Activated T-helper 2 cell treated with anti-CD3 and anti-CD28 coated beads, Interferon-gamma antibody, Interleukin-2, Interleukin-4, amounts not matched to agents 10 μg/mL and 5 μg/mL and 100 μg/mL, durations not matched to agents 14 hours and 24 hours and 36 hours (primary cell): ENCODE measurements at regions of chr7 and their contacts with region 1.

Region 1: DNA sequence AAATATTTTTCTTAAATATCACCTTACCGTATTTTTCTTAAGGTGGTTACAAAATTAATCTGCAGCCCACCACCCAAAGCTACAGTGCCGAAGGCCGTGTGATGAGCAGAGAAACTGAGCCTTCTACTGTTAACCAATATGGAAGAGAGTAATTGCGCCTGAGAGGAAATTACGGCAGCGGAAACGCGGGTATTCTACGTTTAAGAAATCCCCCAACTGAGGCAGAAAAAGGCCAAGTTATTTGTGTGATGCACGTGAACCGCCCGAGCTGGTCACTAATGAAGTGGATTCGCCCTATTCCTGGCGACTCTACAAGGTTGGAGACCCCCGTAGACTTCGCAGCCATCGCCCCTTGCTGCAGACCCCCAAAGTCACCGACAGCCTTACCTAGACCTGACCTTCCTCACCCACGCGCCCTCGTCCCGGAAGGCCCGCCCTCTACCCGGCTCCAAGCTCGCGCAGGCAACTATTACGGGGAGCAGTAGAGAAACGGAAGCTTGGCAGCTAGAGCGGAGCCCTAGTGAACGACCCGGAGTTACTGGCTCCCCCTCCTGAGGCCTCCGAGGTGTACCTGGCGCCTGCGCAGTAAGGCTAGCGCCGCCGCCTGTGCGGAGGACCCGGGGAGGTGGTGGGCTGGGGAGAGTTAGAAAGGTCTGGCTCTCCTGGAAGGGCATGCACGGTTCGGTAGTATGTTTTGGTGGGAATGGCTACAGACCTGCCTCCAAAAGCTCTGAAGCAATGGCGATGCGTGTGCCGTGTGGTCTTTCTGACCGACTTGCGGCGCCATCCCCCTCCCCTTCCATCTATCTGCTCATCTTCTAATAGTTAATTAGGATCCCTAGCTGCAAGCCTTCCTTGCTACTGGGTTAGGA is at the start of gene MRPS33:
- DNase-seq: peak; percentile 93
- H3K4me3 Mint-ChIP-seq: peak within 1 kb of the TSS; percentile 97
- H3K27ac Mint-ChIP-seq: peak within 1 kb of the TSS; percentile 100
- H3K4me1 Mint-ChIP-seq: peaks cover 31% of the 10 kb centered on the region
- H3K27me3 Mint-ChIP-seq: peaks cover 21% of the 10 kb centered on the region
- total RNA-seq, gene MRPS33: 67.4 and 70.0 TPM in 2 replicates

Region 2: GRCh38 chr7:140517546-140518369 is 497.0 kb before region 1 on chr7:
- intact Hi-C with region 1: loop called (anchors 1 kb)
- DNase-seq: peak; percentile 47
- H3K4me3 Mint-ChIP-seq: no peak overlapping the region
- H3K27ac Mint-ChIP-seq: no peak overlapping the region
- H3K4me1 Mint-ChIP-seq: peaks cover 5% of the 10 kb centered on the region
- H3K27me3 Mint-ChIP-seq: peaks cover 2% of the 10 kb centered on the region

Region 3: DNA sequence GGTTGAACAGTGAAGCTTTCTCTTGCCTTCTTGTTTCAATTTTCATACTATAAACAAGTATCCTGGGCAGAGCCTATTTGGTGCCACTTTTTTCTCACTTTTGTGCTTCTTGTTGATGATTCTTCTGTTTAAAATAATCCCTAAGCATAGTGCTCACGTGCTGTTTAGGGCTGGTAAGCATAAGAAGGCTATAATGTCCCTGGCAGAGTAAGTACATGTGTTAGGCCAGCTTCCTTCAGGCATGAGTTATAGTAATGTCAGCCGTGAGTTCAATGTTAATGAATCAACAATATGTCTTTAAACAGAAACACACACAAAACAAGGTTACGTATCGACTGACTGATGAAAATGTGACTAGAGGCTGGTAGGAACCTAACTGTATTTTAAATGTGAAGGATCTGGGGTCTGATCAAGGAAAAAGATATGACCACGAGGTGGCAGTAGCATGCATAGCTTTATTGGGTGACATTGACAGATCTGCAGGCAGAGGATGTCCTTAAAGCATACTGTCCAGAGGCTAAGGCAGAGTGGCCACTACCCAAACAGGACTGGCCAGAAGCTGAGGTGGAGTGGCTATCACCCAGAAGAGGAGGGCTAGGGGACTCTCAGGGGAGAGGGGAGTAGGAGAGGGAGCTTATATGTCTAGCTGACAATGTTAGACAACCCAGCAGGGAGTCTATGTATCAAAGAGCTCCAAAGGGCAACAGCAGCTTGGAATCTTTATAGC is 203.8 kb before region 1 on chr7:
- intact Hi-C with region 1: loop called (anchors 1 kb)
- DNase-seq: peak; percentile 34
- H3K4me3 Mint-ChIP-seq: no peak overlapping the region
- H3K27ac Mint-ChIP-seq: no peak overlapping the region
- H3K4me1 Mint-ChIP-seq: peaks cover 1% of the 10 kb centered on the region
- H3K27me3 Mint-ChIP-seq: no peaks in the 10 kb centered on the region

Region 4: GRCh38 chr7:141053626-141054025 is 38.9 kb after region 1 on chr7:
- intact Hi-C with region 1: loop called (anchors 2 kb)
- DNase-seq: peak; percentile 38
- H3K4me3 Mint-ChIP-seq: no peak overlapping the region
- H3K27ac Mint-ChIP-seq: no peak overlapping the region
- H3K4me1 Mint-ChIP-seq: peaks cover 14% of the 10 kb centered on the region
- H3K27me3 Mint-ChIP-seq: peaks cover 25% of the 10 kb centered on the region

Region 5: DNA sequence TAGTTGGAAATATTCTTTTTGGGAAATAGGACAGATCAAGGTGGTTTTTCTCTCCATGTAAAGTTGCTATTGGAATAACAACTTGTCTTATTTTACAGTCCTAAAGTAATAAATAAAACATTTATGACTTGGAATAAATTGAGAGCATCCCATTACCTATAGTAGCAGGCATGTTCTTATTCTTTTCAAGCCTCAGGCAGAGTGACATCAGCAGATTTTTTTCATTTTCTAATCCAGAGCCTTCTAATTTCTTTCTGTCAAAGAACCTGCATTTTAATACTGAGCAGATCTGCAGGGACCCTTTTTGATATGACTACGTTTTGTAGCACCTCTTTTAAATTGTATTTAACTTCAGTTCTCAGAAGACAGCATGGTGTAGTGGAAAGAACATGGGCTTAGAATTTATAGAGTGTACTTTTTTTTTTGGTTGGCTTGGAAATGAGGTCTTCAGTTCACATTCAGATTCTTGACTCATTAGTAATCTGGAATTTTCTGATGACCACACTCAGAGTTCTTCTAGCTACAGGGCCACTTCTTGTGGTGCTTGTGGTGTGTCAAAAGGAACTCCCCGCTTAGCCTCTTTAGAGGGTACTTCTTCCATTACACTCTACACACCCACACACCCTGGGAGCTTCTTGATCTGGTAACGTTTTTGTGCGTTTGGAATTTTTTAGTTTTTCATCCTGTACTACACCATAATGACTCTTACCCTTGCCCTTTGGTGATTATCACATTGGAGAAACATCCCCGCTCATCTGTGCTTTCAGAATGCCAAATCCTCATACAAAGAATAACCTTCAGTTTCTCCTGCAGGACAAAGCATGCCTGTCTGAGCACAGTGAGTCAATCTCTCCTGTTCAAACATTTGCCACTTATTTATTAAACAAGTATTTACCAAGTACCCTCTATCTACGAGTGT is 571.1 kb after region 1 on chr7:
- intact Hi-C with region 1: loop called (anchors 1 kb)
- DNase-seq: no peak
- H3K4me3 Mint-ChIP-seq: peak overlapping the region; percentile 30
- H3K27ac Mint-ChIP-seq: peak overlapping the region; percentile 87
- H3K4me1 Mint-ChIP-seq: peaks cover 58% of the 10 kb centered on the region
- H3K27me3 Mint-ChIP-seq: no peaks in the 10 kb centered on the region

Region 6: DNA sequence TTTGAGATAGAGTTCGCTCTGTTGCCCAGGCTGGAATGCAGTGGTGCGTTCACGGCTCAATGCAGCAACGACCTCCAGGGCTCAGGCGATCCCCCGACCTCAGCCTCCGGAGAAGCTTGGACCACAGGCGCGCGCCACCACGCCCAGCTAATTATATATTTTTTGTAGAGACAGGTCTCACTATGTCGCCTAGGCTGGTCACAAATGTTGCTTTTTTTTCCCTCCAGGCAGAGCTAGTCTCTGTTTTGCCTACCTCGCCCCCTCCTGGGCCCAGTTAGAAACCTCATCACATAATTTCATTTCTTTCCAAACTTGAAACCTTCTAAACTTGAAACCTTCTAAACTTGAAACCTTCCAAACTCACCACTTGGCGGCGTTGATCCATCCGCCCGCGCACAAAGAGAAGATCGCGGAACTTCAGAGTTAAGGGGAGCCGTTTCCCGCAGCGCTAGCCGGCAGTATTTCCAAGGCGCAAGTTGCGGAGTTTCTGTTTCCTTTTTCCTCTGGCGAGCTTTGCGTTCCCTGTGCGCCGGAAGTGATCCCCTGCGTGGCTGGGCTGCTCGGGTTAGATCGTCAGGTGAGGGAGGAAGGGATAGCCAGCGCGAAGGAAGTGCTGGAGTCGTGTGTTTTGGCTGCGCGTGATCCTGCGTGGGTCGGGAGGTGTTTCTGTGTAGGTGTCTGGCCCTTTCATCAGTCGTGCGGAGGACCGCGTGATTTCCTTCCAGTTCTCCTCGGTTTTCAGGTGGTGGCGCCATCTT is 723.3 kb after region 1 on chr7 and contains the start of gene SSBP1:
- intact Hi-C with region 1: loop called (anchors 1 kb)
- DNase-seq: peak; percentile 93
- H3K4me3 Mint-ChIP-seq: peak within 1 kb of the TSS; percentile 94
- H3K27ac Mint-ChIP-seq: peak within 1 kb of the TSS; percentile 93
- H3K4me1 Mint-ChIP-seq: peaks cover 23% of the 10 kb centered on the region
- H3K27me3 Mint-ChIP-seq: no peaks in the 10 kb centered on the region
- total RNA-seq, gene SSBP1: 244 and 245 TPM in 2 replicates